HEK293 (cell line): ENCODE measurements at regions of chr11 and their contacts with region 1.

Region 1: DNA sequence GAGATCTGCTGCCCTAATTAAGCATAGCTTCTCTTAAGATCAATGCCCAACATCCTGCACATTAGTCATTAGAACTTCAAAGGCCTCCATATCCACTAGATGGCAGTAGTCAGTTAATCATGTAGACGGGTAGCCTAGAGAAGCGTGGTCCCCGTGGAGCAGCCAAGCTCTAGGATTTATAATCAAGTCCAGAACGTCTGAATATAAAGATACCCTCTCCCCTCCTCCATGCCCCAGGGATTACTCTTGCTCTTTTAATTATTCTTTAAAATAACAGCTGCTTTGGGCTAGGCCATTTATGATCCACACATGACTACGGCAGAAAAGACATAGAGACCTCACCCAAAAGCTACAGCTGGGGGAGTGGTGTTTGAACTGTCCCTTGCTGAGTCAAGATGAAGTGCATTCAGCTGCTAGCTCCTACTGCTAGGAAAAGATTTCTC is 327.6 kb upstream of the PLET1 start:
- H3K4me3 ChIP-seq: no peak overlapping the region
- H3K27ac ChIP-seq: no peak overlapping the region
- H3K4me1 ChIP-seq: no peaks in the 10 kb centered on the region
- CTCF ChIP-seq: no peak

Region 2: DNA sequence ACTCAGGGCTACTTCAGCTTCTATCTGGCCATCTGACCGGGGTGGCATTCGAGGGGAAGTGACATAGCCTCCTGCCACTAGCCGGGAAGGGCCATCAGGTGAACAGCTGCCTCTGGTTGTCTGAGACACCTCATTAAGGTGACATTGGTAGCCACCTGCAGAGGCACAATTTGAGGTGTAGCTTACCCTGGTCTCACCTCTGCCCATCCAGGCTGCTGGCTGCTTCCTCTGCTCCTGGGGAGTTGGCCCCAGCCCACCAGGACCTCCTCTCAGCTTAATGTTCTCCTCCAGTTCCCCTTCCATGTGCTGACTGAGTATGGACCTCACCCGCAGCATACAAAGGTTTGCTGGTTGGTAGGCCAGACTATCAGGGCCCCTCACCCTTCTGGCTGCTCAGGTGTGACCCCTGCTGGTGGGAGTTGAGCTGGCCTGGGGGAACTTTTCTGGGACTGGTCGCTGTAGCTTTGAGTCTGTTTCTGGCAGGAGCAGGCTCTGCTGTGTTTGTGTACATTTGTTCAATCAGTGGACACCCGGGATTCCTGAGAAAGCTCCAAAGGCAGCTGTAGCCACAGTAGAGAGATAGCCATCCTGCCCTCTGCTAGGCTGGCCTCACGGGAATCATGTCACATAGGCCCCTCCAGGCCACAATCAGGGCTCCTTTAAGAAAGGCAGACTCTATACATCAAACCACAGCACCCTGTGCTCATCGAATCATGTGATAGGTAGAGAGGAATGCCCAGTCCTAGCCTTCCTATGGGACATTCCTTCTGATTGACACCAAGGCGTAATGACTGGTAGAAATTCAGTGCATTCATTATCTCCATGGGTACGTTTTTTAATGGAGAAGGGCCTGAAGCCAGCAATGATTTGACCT is 32.5 kb before region 1 on chr11:
- CTCF ChIA-PET with region 1: interaction called, 10 read pairs
- POLR2A ChIA-PET with region 1: no interaction called
- H3K4me3 ChIP-seq: no peak overlapping the region
- H3K27ac ChIP-seq: no peak overlapping the region
- H3K4me1 ChIP-seq: no peaks in the 10 kb centered on the region
- CTCF ChIP-seq: peak; percentile 43; the same call in 1 of the 2 replicates

Region 3: DNA sequence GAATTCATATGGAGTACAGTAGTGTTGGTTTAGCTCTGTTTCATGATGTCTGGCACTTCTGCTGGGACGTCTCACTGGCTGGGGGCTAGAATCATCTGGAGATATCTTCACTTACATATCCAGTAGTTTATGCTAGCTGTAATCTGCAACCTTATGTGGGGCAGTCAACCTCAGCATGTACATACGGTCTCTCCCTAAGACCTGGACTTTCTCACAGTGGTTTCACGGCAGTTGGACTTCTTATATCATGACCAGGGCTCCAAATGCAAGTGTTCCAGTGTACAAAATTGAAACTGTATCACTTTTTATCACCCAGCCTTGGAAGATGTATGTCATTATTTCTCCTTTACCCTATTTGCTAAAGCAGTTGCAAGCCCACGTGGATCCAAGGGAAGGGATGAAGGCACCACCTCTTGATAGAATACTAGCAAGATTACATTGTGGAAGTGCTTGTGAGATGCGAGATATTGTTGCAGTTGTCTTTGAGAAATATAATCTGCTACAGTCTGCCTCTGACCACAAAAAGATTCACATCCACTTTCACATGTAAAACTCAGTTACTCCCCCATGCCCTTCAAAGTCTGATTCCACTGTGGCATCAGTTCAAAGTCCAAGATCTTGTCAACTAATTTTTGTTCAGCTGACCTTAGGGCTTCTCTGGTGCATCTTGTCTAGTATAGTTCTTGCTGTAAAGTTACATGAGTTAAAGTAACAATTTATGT is 56.3 kb after region 1 on chr11:
- CTCF ChIA-PET with region 1: no interaction called
- POLR2A ChIA-PET with region 1: no interaction called
- H3K4me3 ChIP-seq: no peak overlapping the region
- H3K27ac ChIP-seq: no peak overlapping the region
- H3K4me1 ChIP-seq: no peaks in the 10 kb centered on the region
- CTCF ChIP-seq: no peak

Region 4: DNA sequence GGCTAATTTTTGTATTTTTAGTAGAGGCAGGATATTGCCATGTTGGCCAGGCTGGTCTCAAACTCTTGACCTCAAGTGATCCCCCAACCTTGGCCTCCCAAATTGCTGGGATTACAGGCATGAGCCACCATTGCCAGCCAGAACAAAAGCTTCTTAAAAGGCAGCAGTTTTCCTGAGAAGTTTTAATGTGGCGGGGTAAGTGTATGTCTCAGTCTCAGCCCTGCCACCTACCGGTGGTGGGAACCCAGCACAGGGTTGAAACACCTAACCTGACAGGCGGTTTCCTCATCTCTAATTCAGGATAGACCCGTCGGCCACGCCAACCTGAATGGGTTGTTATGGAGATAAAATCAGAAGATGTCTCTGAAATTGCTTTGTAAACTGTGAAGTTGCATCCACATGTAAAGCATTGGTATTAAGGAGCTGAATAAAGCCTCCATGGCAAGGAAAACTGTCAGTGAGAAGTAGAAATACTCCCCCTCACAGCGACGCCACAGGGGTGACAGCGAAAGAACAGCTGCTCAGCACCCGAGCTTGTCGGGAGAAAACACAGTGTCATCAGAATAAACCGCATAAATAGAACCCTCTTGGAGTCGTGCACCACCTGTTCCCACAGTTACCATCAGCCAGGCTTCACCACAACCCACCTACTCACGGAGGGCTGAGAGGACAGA is 207.0 kb after region 1 on chr11:
- CTCF ChIA-PET with region 1: interaction called, 36 read pairs
- POLR2A ChIA-PET with region 1: no interaction called
- H3K4me3 ChIP-seq: no peak overlapping the region
- H3K27ac ChIP-seq: no peak overlapping the region
- H3K4me1 ChIP-seq: no peaks in the 10 kb centered on the region
- CTCF ChIP-seq: no peak

Region 5: DNA sequence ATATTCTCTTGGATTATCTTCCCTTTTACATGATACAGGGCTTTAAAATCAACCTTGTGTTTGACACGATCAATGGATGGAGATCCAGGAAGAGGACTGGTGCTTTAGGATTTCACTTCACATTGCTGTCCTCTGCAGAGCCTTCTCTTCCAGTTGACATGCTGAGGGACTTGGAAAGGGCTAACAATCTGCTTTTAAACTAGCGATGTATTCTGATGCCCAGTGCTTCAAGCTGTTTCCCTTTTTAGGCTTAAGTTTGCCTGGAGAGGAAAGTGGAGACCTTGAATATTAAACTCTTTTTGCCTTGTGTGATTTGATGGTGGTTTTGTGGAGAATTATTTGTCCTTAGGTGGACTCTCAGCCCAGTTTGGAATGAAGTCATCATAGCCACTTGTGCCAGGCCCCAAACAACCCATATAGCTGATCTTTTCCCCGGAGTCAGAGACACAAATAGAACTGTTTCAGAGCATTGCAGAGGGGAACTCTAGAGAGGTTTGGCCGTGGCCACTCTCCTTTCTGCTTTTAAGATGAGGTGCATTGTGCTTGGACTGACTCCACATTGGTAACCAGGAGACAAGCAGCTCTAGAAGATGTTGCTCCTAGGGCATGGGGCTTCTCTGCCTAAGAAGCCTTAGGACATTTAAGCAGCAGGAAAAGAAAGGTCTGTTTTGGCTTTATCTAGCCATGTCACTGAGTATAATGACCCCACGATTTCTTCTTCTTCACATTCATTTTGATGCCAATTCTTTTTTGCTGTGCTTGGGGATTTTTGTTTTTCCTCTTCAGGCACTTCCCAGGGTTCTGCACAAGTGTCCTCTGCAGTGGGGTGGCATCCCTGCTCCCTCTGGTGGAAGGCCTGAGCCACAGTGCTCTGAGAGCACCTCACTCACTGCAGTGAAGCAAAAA is 525.8 kb after region 1 on chr11:
- CTCF ChIA-PET with region 1: interaction called, 24 read pairs
- POLR2A ChIA-PET with region 1: no interaction called
- H3K4me3 ChIP-seq: no peak overlapping the region
- H3K27ac ChIP-seq: no peak overlapping the region
- H3K4me1 ChIP-seq: no peaks in the 10 kb centered on the region
- CTCF ChIP-seq: peak; percentile 69

Region 6: GRCh38 chr11:113289431-113290187 is 701.3 kb after region 1 on chr11:
- CTCF ChIA-PET with region 1: interaction called, 80 read pairs
- POLR2A ChIA-PET with region 1: no interaction called
- H3K4me3 ChIP-seq: no peak overlapping the region
- H3K27ac ChIP-seq: no peak overlapping the region
- H3K4me1 ChIP-seq: no peaks in the 10 kb centered on the region
- CTCF ChIP-seq: peak; percentile 69